ENCODE measurements at regions of chr1 and their contacts with region 1.

Region 1: DNA sequence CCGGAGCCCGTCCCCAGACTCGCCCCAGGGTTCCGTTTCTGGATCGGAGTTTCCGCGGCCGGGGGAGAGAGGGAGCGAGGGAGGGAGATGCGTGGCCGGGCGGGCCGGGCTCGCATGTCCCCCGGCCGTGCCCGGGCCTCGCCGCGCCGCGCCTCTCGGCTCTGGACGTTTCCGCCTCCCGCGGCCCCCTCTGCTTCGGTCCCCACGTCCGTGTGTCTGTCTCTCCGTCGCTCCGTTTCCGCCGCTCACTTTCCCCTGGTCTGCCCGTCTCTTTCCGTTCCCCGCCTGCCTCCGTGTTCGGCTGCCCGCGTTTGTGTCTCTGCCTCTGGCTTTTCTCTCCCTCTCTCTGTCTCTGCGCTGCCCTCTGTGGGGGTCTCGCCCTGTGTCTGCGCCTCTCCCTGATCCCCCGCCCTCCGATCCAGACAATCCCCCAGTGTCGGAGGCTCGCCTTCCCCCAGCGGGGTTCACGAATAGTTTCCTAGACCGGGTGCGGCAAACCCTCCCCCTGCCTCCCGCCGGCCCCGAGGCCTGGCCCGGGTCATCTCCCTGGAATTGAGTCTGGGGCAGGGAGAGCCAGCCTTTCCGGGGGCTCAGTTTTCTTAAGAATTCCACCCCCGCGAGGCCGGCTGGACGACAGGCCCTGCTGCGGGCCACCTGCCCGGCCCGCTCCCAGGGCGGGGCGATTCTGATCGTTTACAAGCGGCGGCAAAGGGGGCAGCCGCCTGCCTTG is 735 bp downstream of the NBL1 start:
- DNase-seq: no peak
- ATAC-seq: peak; percentile 17

Region 2: DNA sequence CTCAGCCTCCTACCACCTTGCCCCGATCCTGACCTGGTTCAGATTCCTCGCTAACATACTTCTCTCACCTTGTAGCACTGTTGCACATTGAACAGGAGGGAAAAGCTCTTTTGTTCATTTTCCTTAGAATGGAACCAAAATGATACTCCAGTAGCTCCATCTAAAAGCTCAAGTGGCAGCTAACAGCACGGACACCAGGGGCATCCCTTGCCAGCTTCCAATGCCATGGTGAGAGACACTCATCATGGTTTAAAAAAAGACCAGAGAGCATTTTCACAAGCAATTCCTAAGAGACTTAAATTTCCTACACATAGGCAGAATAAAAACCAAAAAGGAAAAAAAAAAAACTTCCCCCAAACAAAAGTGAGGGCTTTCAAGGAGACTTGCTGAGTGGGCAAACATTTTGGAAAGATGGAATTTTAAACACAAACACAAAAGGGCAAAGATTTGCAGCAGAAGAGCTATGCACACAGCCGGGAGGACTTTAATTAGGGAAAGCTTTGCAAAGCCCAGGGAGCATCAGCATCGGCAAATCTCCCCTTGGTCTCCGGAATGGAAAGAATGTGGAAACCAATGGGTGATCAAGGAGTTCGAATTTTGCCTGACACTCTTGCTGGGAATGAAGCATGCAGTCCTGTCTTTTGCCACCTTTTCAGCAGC is 243.8 kb before region 1 on chr1:
- intact Hi-C with region 1: loop called (anchors 5 kb)
- DNase-seq: no peak
- ATAC-seq: no peak

Region 3: GRCh38 chr1:19616489-19616888 is 28.4 kb before region 1 on chr1:
- intact Hi-C with region 1: no loop called
- DNase-seq: no peak
- ATAC-seq: no peak

Region 4: GRCh38 chr1:19682257-19682656 is 37.4 kb after region 1 on chr1:
- intact Hi-C with region 1: no loop called
- DNase-seq: no peak
- ATAC-seq: no peak

Region 5: GRCh38 chr1:19825298-19825697 is 180.5 kb after region 1 on chr1:
- intact Hi-C with region 1: no loop called
- DNase-seq: no peak
- ATAC-seq: no peak

Region 6: DNA sequence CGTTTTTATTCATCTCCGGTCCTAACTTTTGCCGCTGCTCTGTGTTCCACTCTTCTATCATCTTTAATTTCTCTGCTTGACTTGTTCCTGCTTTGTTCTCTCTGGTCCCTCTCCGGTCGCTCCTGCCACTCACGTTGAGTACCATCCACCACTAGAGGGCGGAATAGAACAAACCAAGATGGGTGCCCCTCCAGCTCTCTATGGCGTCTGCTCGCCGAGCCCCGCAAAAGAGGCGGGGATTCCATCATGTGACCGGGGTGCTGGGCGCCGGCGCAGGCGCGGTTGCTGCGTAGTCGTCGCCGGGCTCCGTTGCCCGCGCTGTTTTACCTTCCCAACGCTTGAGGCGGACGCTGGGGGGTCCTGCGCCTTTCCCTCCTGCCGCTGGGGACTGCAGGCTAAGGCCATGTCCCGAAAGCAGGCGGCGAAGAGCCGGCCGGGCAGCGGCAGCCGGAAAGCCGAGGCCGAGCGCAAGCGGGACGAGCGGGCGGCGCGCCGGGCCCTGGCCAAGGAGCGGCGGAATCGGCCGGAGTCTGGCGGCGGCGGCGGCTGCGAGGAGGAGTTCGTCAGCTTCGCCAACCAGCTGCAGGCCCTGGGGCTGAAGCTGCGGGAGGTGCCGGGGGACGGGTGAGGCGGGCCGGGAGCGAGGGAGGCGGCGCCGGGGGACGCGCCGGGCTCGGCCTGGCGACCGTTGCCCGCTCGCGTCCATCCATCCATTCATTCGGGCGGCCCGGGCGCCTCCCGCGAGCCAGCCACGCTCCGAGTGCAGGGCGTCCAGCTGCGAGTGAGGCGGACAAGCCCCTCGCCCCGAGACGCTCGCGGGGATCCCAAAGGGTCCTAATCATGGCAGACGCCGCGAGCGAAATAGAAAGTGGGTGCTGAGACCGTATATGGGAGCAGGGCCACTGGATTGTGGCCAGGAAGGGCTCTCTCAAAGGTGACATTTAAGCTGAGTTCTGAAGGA is 237.5 kb after region 1 on chr1 and contains the start of gene OTUD3:
- intact Hi-C with region 1: no loop called
- DNase-seq: peak; percentile 96
- ATAC-seq: peak; percentile 100
- total RNA-seq, gene OTUD3: 14.0 TPM

Measured in sciatic nerve (tissue), 2 donors.